A673 (cell line): ENCODE measurements at regions of chr16 and their contacts with region 1.

Region 1: DNA sequence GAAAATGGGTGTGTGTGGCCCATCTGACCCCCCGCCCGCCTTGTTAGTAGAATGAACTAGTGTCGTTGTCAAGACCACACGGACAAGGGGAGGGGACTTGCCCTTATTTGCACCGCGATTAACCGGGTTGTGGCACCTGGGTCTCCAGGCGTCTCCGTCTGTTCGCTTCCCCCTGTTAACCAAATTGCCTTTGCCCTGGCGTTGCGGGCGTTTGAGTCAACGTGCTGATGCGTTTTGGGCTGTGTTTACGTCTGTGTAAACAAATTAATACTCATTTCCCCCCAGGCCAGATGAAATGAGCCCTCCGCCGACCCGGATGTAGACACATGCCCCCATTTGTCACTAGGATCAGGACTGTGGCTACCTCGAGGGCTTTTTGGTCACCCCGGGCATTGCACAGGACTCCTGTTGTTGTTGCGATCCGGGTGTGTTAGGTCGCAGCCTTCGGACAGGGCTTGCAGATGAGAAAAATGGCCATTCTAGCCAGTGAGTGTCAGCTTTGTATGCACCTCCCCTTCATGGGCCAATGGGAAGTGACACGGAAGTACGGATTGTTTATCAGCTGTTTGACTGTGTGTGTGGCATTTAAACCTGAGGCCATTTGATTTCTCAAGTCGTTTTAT is 906 bp downstream of the RBL2 start:
- DNase-seq: peak; percentile 79
- H3K4me3 ChIP-seq: peak overlapping the region; percentile 88
- H3K27ac ChIP-seq: peak overlapping the region; percentile 87
- H3K4me1 ChIP-seq: peaks cover 7% of the 10 kb centered on the region
- H3K27me3 ChIP-seq: no peaks in the 10 kb centered on the region
- CTCF ChIP-seq: no peak

Region 2: GRCh38 chr16:53449632-53450517 is 14.7 kb after region 1 on chr16:
- CTCF ChIA-PET with region 1: no interaction called
- POLR2A ChIA-PET with region 1: interaction called, 20 read pairs
- intact Hi-C with region 1: no loop called
- DNase-seq: no peak
- H3K4me3 ChIP-seq: no peak overlapping the region
- H3K27ac ChIP-seq: no peak overlapping the region
- H3K4me1 ChIP-seq: no peaks in the 10 kb centered on the region
- H3K27me3 ChIP-seq: no peaks in the 10 kb centered on the region
- CTCF ChIP-seq: no peak

Region 3: GRCh38 chr16:53566552-53567245 is 131.5 kb after region 1 on chr16:
- CTCF ChIA-PET with region 1: no interaction called
- POLR2A ChIA-PET with region 1: no interaction called
- intact Hi-C with region 1: no loop called
- DNase-seq: no peak
- H3K4me3 ChIP-seq: no peak overlapping the region
- H3K27ac ChIP-seq: no peak overlapping the region
- H3K4me1 ChIP-seq: no peaks in the 10 kb centered on the region
- H3K27me3 ChIP-seq: no peaks in the 10 kb centered on the region
- CTCF ChIP-seq: no peak